CD14-positive monocyte (primary cell): ENCODE measurements at regions of chr4 and their contacts with region 1.

Region 1: DNA sequence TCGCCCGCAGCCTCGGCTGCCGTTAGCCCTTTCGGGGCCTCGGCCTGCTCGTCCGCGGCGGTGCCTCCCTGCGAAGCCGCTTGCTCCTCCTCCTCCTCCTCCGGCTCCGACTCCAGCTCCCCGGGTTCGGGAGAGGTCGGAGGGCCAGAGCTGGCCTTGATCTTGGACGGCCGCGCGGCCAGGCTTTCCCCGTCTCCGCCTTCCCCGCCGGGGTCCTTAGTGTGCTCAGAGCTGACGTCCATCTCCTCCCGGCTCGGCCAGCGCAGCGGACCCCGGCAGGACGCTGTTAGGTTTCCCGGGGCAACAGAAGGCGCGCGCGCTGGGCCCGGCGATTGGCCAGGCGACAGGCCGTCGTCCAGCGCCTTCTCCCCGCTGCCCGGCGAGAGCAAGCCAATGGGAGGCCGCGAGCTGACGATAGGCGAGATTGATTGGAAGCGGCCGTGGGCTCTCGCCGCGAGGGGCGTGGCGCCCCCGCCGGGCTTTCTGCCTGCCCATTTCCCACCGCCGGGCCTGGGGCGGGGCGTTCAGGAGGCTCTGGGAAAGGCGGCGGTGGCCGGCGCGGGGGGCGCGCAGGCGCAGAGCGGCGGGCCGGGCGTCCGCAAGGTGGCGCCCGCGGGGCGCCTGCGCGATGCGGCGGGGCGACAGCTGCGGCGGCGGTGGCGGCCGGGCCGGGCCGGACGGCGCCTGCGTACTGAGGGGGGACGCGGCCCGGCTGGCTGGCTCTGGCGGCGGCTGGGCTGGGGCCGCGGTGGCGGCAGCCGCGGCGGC is at the start of gene TADA2B:
- DNase-seq: peak; percentile 97 to 98 (median 97)
- H3K4me3 ChIP-seq: peak within 1 kb of the TSS; percentile 84 to 92 (median 87)
- H3K4me3 Mint-ChIP-seq: peak within 1 kb of the TSS; percentile 89 to 97
- H3K27ac ChIP-seq: peak within 1 kb of the TSS; percentile 76 to 88
- H3K27ac Mint-ChIP-seq: peak within 1 kb of the TSS; percentile 81 to 95 (median 90)
- H3K4me1 ChIP-seq: peaks cover 39 to 52% of the 10 kb centered on the region in 2 donors
- H3K4me1 Mint-ChIP-seq: peaks cover 59% of the 10 kb centered on the region
- H3K27me3 ChIP-seq: no peaks in the 10 kb centered on the region
- H3K27me3 Mint-ChIP-seq: peaks cover 0 to 10% (median 3%) of the 10 kb centered on the region in 3 donors
- CTCF ChIP-seq: peak; percentile 21
- polyA plus RNA-seq, gene TADA2B: 2.0 to 10.2 (median 2.6) TPM

Region 2: DNA sequence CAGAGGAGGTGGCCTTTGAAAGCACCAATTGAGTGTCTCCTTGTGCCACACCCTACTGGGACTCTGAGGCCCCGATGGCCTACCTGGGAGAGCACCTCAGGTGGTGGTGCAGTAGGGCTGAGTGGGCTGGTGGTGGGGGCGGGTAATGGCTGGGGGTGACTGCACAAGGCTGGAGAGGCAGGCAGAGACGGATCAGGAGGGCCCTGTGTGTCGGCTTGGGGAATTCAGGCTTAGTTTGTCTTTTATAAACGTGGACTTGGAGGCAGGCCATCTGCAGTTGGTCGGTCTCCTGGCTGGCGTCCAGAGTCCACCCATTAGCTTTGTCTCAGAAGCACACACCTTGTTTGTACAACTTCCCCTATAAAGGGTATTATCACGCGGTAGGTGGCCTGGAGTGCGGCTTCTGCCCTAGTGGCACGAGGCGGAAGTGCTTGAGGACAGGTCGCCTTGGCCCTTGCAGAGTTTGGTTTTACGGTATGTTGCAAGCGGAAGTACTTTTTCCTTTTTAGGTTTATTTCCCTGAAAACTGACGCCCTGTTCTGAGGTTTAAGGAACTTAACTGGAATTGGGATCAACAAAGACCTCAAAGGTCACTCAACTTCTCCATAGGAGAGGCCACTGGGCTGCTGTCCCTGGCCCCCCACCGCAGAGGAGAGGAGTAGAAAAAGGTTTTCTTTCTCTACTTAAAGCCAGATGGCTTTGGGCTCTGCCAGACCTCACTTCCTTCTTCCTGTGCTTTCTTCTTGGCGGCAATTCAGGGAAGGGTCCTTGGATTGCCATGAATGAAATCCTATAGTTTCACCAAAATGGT is 125.2 kb before region 1 on chr4:
- intact Hi-C with region 1: loop called in 1 of 2 experiments (anchors 10 kb)
- DNase-seq: peak; percentile 81 to 93 (median 90)
- H3K4me3 ChIP-seq: peak overlapping the region in 1 of 3 experiments; percentile 55
- H3K4me3 Mint-ChIP-seq: peak overlapping the region; percentile 40 to 83
- H3K27ac ChIP-seq: peak overlapping the region; percentile 48 to 77
- H3K27ac Mint-ChIP-seq: peak overlapping the region; percentile 89 to 95 (median 93)
- H3K4me1 ChIP-seq: peaks cover 53 to 59% of the 10 kb centered on the region in 2 donors
- H3K4me1 Mint-ChIP-seq: peaks cover 74% of the 10 kb centered on the region
- H3K27me3 ChIP-seq: no peaks in the 10 kb centered on the region
- H3K27me3 Mint-ChIP-seq: peaks cover 0 to 2% (median 2%) of the 10 kb centered on the region in 3 donors
- CTCF ChIP-seq: peak; percentile 87

Region 3: GRCh38 chr4:6986781-6987587 is 55.9 kb before region 1 on chr4:
- intact Hi-C with region 1: loop called (anchors 2 to 5 kb)
- DNase-seq: peak; percentile 90 to 91 (median 90)
- H3K4me3 ChIP-seq: peak overlapping the region; percentile 57 to 80 (median 69)
- H3K4me3 Mint-ChIP-seq: peak overlapping the region; percentile 92 to 94
- H3K27ac ChIP-seq: peak overlapping the region; percentile 79 to 81
- H3K27ac Mint-ChIP-seq: peak overlapping the region; percentile 91 to 98 (median 97)
- H3K4me1 ChIP-seq: peaks cover 71 to 80% of the 10 kb centered on the region in 2 donors
- H3K4me1 Mint-ChIP-seq: peaks cover 81% of the 10 kb centered on the region
- H3K27me3 ChIP-seq: no peaks in the 10 kb centered on the region
- H3K27me3 Mint-ChIP-seq: peaks cover 0 to 3% (median 2%) of the 10 kb centered on the region in 3 donors
- CTCF ChIP-seq: no peak

Region 4: GRCh38 chr4:7058792-7059191 is 15.9 kb after region 1 on chr4:
- intact Hi-C with region 1: loop called in 1 of 2 experiments (anchors 2 kb)
- DNase-seq: no peak
- H3K4me3 ChIP-seq: peak overlapping the region in 1 of 3 experiments; percentile 1
- H3K4me3 Mint-ChIP-seq: no peak overlapping the region
- H3K27ac ChIP-seq: peak overlapping the region in 1 of 2 donors; percentile 57
- H3K27ac Mint-ChIP-seq: peak overlapping the region in 4 of 7 donors; percentile 23 to 73 (median 54)
- H3K4me1 ChIP-seq: peaks cover 56 to 58% of the 10 kb centered on the region in 2 donors
- H3K4me1 Mint-ChIP-seq: peaks cover 61% of the 10 kb centered on the region
- H3K27me3 ChIP-seq: no peaks in the 10 kb centered on the region
- H3K27me3 Mint-ChIP-seq: peaks cover 1 to 9% (median 3%) of the 10 kb centered on the region in 3 donors
- CTCF ChIP-seq: no peak